BJ (cell line): ENCODE measurements at regions of chr1 and their contacts with region 1.

Region 1: GRCh38 chr1:63773815-63774616 is at the start of gene ROR1:
- DNase-seq: no peak
- H3K4me3 ChIP-seq: peak within 1 kb of the TSS; percentile 60
- H3K27me3 ChIP-seq: peaks cover 11% of the 10 kb centered on the region
- CTCF ChIP-seq: peak; percentile 87
- polyA plus RNA-seq, gene ROR1: 4.4 and 4.6 TPM in 2 replicates

Region 2: GRCh38 chr1:64060611-64061302 is 286.7 kb after region 1 on chr1:
- CTCF ChIA-PET with region 1: no interaction called
- POLR2A ChIA-PET with region 1: interaction called, 10 read pairs
- DNase-seq: no peak
- H3K4me3 ChIP-seq: no peak overlapping the region
- H3K27me3 ChIP-seq: no peaks in the 10 kb centered on the region
- CTCF ChIP-seq: no peak